Posterior cingulate gyrus (tissue), 11 donors: ENCODE measurements at regions of chr9 and their contacts with region 1.

Region 1: DNA sequence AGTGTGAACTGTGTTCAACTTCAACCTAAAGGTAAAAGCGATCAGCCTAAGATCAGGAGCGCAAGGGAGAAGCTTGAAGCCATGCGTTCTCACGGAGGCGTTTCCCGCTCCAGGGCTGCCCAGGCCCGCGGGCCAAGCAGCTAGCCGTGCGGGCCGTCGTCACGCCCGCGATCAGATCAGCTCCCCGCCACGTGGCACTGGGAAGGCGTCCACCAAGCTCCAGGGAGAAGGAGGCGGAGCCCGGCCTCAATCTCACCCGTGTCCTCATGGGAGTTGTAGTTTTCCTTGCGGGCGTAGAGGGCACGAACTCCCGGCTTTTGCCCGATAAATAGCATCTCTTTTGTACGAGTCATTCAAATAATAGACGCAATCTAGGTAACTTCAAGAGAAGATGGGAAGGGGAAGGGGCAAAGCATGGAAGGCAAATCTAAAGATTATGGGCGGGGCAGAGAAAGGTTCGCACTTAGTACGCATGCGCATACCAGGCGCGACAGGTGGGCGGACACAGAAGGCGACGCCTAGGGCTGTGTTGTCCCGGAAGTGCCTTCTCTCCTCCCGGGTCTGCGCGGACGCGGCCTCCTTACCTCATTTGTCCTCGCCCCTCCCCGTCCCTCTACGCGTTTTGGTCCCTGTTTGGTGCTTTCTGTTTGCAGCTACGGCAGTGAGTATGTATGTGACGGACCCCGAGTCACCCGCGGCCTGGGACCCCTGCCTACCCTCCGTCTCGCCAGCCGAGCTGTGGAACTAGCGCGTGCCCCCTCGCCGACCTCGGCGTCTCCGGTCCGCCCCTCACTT is 40.8 kb upstream of the ZCCHC7 start:
- DNase-seq: peak; percentile 85 to 98 (median 92)

Region 2: DNA sequence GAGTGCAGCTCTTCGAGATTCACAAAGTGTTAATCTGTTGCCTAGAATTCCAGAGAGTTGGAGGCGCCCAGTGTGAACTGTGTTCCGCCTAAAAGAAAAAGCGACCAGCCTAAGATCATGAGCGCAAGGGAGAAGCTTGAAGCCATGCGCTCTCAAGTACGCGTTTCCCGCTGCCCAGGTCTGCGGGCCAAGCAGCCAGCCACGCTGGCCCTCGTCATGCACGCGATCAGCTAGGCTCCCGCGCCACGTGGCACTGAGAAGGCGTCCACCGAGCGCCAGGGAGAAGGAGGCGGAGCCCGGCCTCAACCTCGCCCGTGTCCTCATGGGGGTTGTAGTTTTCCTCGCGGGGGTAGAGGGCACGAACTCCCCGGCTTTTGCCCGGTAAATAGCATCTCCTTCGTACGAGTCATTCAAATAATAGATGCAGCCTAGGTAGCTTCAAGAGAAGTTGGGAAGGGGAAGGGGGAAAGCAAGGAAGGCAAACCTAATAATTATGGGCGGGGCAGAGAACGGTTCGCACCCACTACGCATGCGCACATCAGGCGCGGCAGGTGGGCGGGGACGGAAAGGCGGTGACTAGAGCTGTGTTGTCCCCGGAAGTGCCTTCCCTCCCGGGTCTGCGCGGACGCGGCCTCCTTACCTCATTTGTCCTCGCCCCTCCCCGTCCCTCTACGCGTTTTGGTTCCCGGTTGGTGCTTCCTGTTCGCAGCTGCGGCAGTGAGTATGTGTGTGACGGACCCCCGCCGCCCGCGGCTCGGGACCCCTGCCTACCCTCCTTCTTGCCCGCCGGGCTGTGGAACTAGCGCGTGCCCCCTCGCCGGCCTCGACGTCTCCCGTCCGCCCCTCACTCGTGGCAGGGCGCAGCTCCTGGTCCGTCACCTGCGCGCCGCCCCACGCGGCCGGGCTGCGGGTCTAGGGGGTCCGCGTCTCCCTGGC is 40.6 kb after region 1 on chr9 and contains the start of gene ZCCHC7:
- intact Hi-C with region 1: loop called (anchors 1 kb)
- DNase-seq: peak; percentile 92 to 99 (median 96)

Region 3: GRCh38 chr9:37141015-37141414 is 61.4 kb after region 1 on chr9:
- intact Hi-C with region 1: no loop called
- DNase-seq: no peak